Tibial artery (tissue), 4 donors: ENCODE measurements at regions of chr7 and their contacts with region 1.

Region 1: GRCh38 chr7:135645296-135645904 is 16.9 kb upstream of the STMP1 start:
- DNase-seq: no peak
- H3K4me3 ChIP-seq: peak overlapping the region in 1 of 2 donors; percentile 10
- H3K27ac ChIP-seq: no peak overlapping the region
- H3K4me1 ChIP-seq: no peaks in the 10 kb centered on the region
- H3K27me3 ChIP-seq: no peaks in the 10 kb centered on the region
- CTCF ChIP-seq: peak; percentile 64 to 73

Region 2: DNA sequence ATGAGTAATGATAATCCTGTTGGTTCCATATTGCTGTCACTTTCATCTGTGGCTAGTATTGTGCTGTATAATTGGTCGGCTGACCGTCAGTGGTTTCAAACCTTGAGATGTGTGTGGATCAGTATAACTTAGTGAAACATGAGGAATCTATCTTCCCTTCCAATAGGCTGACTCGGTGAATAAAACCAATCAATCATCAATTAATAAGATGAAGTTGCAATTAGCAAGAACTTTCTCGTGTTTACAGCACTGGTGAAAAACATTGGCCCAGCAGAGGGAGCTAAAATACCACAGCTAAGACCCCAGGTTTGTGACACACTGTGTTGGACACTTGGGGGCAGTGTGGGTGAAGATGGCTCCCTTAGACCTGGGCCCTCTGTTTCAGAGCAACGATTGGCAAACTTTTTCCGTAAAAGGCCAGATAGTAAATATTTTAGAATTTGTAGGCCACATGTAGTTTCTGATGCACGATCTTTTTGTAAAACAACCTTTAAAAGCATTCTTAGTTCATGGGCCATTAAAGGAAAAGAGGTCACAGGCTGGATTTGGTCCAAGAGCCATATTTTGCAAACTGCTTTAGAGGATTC is 363.9 kb before region 1 on chr7:
- intact Hi-C with region 1: loop called (anchors 10 kb)
- DNase-seq: peak; percentile 83 to 88
- H3K4me3 ChIP-seq: no peak overlapping the region
- H3K27ac ChIP-seq: no peak overlapping the region
- H3K4me1 ChIP-seq: peaks cover 0 to 9% (median 2%) of the 10 kb centered on the region in 4 donors
- H3K27me3 ChIP-seq: peaks cover 0 to 2% of the 10 kb centered on the region in 2 donors
- CTCF ChIP-seq: peak; percentile 89 to 94